PC-9 (cell line): ENCODE measurements at regions of chr2 and their contacts with region 1.

Region 1: GRCh38 chr2:241975890-241976695 is 106.6 kb downstream of the RTP5 start:
- DNase-seq: no peak
- H3K4me3 ChIP-seq: no peak overlapping the region
- H3K27ac ChIP-seq: no peak overlapping the region
- H3K4me1 ChIP-seq: no peaks in the 10 kb centered on the region
- H3K27me3 ChIP-seq: peaks cover 90% of the 10 kb centered on the region
- CTCF ChIP-seq: no peak

Region 2: GRCh38 chr2:241894681-241895426 is 81.2 kb before region 1 on chr2:
- CTCF ChIA-PET with region 1: interaction called, 20 read pairs
- POLR2A ChIA-PET with region 1: no interaction called
- intact Hi-C with region 1: no loop called
- DNase-seq: no peak
- H3K4me3 ChIP-seq: no peak overlapping the region
- H3K27ac ChIP-seq: no peak overlapping the region
- H3K4me1 ChIP-seq: peaks cover 16% of the 10 kb centered on the region; the same call in 1 of the 2 replicates
- H3K27me3 ChIP-seq: peaks cover 49% of the 10 kb centered on the region
- CTCF ChIP-seq: no peak

Region 3: DNA sequence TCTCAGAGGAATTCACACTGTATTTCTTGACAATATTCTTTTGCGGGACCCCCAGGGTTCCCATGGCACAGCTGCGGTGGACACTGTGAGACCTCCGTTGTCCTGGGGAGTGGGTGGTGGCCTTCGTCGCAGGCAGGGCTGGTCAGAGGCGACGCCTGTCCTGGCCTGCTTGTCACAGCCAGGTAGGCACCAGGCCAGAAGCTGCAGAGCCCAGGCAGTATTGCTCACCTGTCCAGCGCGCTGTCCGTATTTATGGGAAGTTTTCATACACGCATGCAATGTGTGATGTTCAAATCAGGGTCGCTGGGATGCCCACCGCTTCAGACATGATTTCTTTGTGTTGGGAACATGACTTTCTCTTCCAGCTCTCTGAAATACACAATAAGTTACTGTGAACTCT is 20.0 kb after region 1 on chr2:
- CTCF ChIA-PET with region 1: no interaction called
- POLR2A ChIA-PET with region 1: no interaction called
- intact Hi-C with region 1: no loop called
- DNase-seq: no peak
- H3K4me3 ChIP-seq: no peak overlapping the region
- H3K27ac ChIP-seq: no peak overlapping the region
- H3K4me1 ChIP-seq: no peaks in the 10 kb centered on the region
- H3K27me3 ChIP-seq: peaks cover 98% of the 10 kb centered on the region
- CTCF ChIP-seq: no peak